T-cell (primary cell): ENCODE measurements at regions of chr19 and their contacts with region 1.

Region 1: GRCh38 chr19:18281082-18282020 is at the start of gene JUND:
- DNase-seq: peak; percentile 91 to 100 (median 97)
- ATAC-seq: peak; percentile 67 to 70 (median 68)
- H3K4me3 ChIP-seq: peak within 1 kb of the TSS; percentile 100
- H3K4me3 Mint-ChIP-seq: peak within 1 kb of the TSS; percentile 94 to 98 (median 96)
- H3K27ac ChIP-seq: peak within 1 kb of the TSS; percentile 100
- H3K27ac Mint-ChIP-seq: peak within 1 kb of the TSS; percentile 97 to 99
- H3K4me1 ChIP-seq: peaks cover 28 to 49% of the 10 kb centered on the region in 2 experiments
- H3K4me1 Mint-ChIP-seq: peaks cover 44 to 58% (median 51%) of the 10 kb centered on the region in 3 donors
- H3K27me3 ChIP-seq: no peaks in the 10 kb centered on the region
- H3K27me3 Mint-ChIP-seq: no peaks in the 10 kb centered on the region
- total RNA-seq, gene JUND: 247 to 1,161 (median 272) TPM

Region 2: DNA sequence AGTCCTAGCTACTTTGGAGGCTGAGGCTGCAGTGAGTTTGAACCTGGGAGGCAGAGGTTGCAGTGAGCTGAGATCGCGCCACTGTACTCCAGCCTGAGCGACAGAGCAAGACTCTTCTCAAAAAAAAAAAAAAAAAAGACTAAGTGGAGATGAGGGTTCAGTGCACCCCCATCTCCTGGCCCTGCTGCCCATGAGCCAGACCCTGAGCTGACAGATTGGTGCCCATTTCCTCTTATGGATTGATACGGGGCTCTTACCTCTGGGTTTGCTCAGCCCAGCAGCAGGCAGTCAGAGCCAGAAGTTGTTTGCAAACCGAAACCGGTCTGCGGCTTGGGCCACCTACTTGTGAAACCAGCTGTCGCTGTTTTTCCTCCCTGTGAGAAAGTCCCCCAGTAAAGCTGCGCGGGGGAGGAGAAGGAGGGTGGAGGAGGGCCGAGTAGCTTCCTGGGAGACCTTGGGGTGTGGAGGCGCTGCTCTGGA is 236.5 kb before region 1 on chr19:
- CTCF ChIA-PET with region 1: no interaction called
- POLR2A ChIA-PET with region 1: interaction called in 1 of 2 experiments, 10 read pairs
- DNase-seq: peak; percentile 61 to 93 (median 80)
- ATAC-seq: peak; percentile 97 to 99 (median 98)
- H3K4me3 ChIP-seq: peak overlapping the region; percentile 50 to 66
- H3K4me3 Mint-ChIP-seq: peak overlapping the region; percentile 60 to 75 (median 74)
- H3K27ac ChIP-seq: peak overlapping the region; percentile 84
- H3K27ac Mint-ChIP-seq: peak overlapping the region; percentile 89 to 95
- H3K4me1 ChIP-seq: peaks cover 17 to 37% of the 10 kb centered on the region in 2 experiments
- H3K4me1 Mint-ChIP-seq: peaks cover 41 to 61% (median 41%) of the 10 kb centered on the region in 3 donors
- H3K27me3 ChIP-seq: peaks cover 0 to 3% of the 10 kb centered on the region in 2 experiments
- H3K27me3 Mint-ChIP-seq: no peaks in the 10 kb centered on the region

Region 3: GRCh38 chr19:18291590-18292461 is 10.5 kb after region 1 on chr19:
- CTCF ChIA-PET with region 1: interaction called in 1 of 2 experiments, 15 read pairs
- POLR2A ChIA-PET with region 1: interaction called, 28 to 95 read pairs
- DNase-seq: peak in 34 of 35 experiments; percentile 56 to 86 (median 72)
- ATAC-seq: peak; percentile 42 to 56 (median 52)
- H3K4me3 ChIP-seq: peak overlapping the region; percentile 79 to 94
- H3K4me3 Mint-ChIP-seq: peak overlapping the region; percentile 86 to 89 (median 89)
- H3K27ac ChIP-seq: peak overlapping the region; percentile 100
- H3K27ac Mint-ChIP-seq: peak overlapping the region; percentile 93 to 96
- H3K4me1 ChIP-seq: peaks cover 14 to 79% of the 10 kb centered on the region in 2 experiments
- H3K4me1 Mint-ChIP-seq: peaks cover 46 to 69% (median 58%) of the 10 kb centered on the region in 3 donors
- H3K27me3 ChIP-seq: no peaks in the 10 kb centered on the region
- H3K27me3 Mint-ChIP-seq: no peaks in the 10 kb centered on the region

Region 4: GRCh38 chr19:18322759-18323460 is 41.6 kb after region 1 on chr19 and contains the start of gene LSM4:
- CTCF ChIA-PET with region 1: interaction called, 5 to 34 read pairs
- POLR2A ChIA-PET with region 1: interaction called, 16 to 67 read pairs
- DNase-seq: peak; percentile 99 to 100 (median 99)
- ATAC-seq: peak; percentile 92 to 95 (median 94)
- H3K4me3 ChIP-seq: peak within 1 kb of the TSS; percentile 84 to 93
- H3K4me3 Mint-ChIP-seq: peak within 1 kb of the TSS; percentile 80 to 86 (median 82)
- H3K27ac ChIP-seq: peak within 1 kb of the TSS; percentile 94
- H3K27ac Mint-ChIP-seq: peak within 1 kb of the TSS; percentile 96 to 98
- H3K4me1 ChIP-seq: peaks cover 36 to 62% of the 10 kb centered on the region in 2 experiments
- H3K4me1 Mint-ChIP-seq: peaks cover 52 to 55% (median 54%) of the 10 kb centered on the region in 3 donors
- H3K27me3 ChIP-seq: no peaks in the 10 kb centered on the region
- H3K27me3 Mint-ChIP-seq: no peaks in the 10 kb centered on the region
- total RNA-seq, gene LSM4: 58.5 to 82.7 (median 69.1) TPM

Region 5: GRCh38 chr19:19137556-19138168 is 856.3 kb after region 1 on chr19:
- CTCF ChIA-PET with region 1: no interaction called
- POLR2A ChIA-PET with region 1: interaction called in 1 of 2 experiments, 16 read pairs
- DNase-seq: no peak
- ATAC-seq: no peak
- H3K4me3 ChIP-seq: peak overlapping the region; percentile 88 to 95
- H3K4me3 Mint-ChIP-seq: peak overlapping the region; percentile 88 to 98 (median 90)
- H3K27ac ChIP-seq: peak overlapping the region; percentile 70
- H3K27ac Mint-ChIP-seq: peak overlapping the region in 1 of 2 donors; percentile 97
- H3K4me1 ChIP-seq: peaks cover 3 to 32% of the 10 kb centered on the region in 2 experiments
- H3K4me1 Mint-ChIP-seq: peaks cover 32 to 38% (median 36%) of the 10 kb centered on the region in 3 donors
- H3K27me3 ChIP-seq: peaks cover 0 to 7% of the 10 kb centered on the region in 2 experiments
- H3K27me3 Mint-ChIP-seq: peaks cover 0 to 2% of the 10 kb centered on the region in 2 donors